ENCODE measurements at regions of chr12 and their contacts with region 1.

Region 1: DNA sequence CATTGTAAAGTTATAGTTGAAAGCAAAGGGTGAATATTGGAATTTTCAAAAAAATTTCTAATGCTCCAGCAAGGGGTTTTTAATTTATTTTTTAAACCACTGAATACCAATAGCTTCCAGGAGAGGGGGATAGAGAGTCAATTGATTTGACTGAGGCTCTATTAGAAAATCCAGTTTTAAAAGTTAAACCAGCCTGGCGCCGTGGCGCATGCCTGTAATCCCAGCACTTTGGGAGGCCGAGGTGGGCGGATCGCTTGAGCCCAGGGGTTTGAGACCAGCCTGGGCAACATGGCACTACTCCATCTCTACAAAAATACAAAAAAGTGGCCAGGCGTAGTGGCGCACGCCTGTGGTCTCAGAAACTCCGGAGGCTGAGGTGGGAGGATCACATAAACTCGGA is 150.1 kb downstream of the SLC38A4 start:
- DNase-seq: no peak
- ATAC-seq: no peak
- H3K4me3 Mint-ChIP-seq: no peak overlapping the region
- H3K27ac Mint-ChIP-seq: no peak overlapping the region
- H3K4me1 Mint-ChIP-seq: peaks cover 8% of the 10 kb centered on the region
- H3K27me3 Mint-ChIP-seq: no peaks in the 10 kb centered on the region

Region 2: DNA sequence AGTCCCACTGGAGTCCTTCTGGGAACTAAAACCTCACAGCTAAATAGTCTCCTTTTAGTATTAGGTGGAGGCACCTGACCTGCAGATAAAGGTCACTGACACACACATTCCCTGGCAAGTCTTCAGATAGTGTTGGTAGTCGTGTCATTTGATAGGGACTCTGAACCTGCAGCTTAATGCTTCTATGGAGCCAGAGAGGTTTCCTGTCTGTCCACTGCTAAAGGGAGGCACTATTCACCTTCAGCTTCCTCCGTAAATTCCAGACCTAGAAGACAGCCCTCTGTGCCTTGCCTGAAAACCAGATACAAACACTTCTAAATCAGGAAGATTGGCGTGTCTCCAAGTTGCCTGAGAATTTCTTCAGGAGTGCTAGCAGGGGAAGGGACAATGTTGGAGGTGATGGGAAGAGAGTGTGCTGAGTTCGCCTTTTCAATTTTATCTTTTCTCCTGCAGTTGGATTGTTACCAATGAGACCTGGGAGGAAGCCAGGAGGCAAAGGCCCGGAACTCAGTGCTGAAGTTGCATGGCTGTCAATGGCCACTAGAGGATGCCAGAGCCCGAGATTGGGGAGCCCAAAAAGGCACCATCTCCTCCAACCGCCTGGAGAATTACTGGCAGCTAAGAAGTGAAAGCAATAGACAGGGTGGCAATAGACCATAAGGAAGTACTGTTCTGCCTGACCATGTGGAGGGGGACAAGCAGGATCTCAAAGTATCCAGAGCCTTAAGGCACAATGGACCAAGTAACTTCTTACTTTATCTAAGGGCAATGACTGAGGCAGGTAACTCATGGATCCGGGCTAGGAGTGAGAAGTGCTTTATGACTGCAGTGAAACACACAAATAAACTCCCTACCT is 603.7 kb before region 1 on chr12:
- CTCF ChIA-PET with region 1: no interaction called
- POLR2A ChIA-PET with region 1: no interaction called
- intact Hi-C with region 1: loop called in 1 of 2 experiments (anchors 5 kb)
- DNase-seq: peak; percentile 80
- ATAC-seq: peak; percentile 98
- H3K4me3 Mint-ChIP-seq: no peak overlapping the region
- H3K27ac Mint-ChIP-seq: peak overlapping the region; percentile 47
- H3K4me1 Mint-ChIP-seq: peaks cover 3% of the 10 kb centered on the region
- H3K27me3 Mint-ChIP-seq: peaks cover 2% of the 10 kb centered on the region

Region 3: DNA sequence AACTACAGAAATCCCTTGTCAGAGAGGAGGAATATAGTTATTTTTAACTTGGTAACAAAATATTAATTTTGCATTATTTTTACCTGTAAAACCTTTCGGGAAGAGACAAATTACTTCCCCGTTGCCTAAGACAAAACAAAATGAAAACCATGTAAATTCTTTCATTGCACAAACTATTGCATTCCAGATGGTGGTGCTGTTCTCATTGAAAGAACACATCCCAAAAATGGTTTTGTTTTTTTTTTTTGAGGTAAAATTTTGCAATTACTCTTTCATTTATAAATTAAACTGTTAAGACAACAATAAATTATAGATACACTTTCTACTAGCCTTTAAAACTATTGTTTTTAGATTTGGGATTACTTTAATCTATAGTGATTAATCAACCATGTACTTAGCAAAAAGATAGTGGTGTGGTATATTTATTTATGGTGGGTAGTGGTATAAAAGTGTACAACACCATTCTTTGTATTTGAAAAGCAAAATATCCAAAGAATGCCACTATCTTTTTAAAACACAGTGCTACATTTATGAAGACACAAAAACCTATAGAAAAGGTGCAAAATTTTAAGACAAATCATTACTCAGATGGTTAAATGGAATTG is 522.4 kb before region 1 on chr12:
- CTCF ChIA-PET with region 1: no interaction called
- POLR2A ChIA-PET with region 1: no interaction called
- intact Hi-C with region 1: loop called (anchors 2 to 10 kb)
- DNase-seq: no peak
- ATAC-seq: no peak
- H3K4me3 Mint-ChIP-seq: no peak overlapping the region
- H3K27ac Mint-ChIP-seq: no peak overlapping the region
- H3K4me1 Mint-ChIP-seq: peaks cover 9% of the 10 kb centered on the region
- H3K27me3 Mint-ChIP-seq: peaks cover under 1% of the 10 kb centered on the region

Region 4: GRCh38 chr12:46342562-46343033 is 333.1 kb before region 1 on chr12:
- CTCF ChIA-PET with region 1: interaction called, 3 read pairs
- POLR2A ChIA-PET with region 1: no interaction called
- intact Hi-C with region 1: loop called in 1 of 2 experiments (anchors 2 kb)
- DNase-seq: peak; percentile 21
- ATAC-seq: peak; percentile 66
- H3K4me3 Mint-ChIP-seq: no peak overlapping the region
- H3K27ac Mint-ChIP-seq: no peak overlapping the region
- H3K4me1 Mint-ChIP-seq: peaks cover 5% of the 10 kb centered on the region
- H3K27me3 Mint-ChIP-seq: peaks cover 2% of the 10 kb centered on the region

Region 5: GRCh38 chr12:46933947-46934346 is 258.2 kb after region 1 on chr12:
- CTCF ChIA-PET with region 1: no interaction called
- POLR2A ChIA-PET with region 1: no interaction called
- intact Hi-C with region 1: loop called (anchors 2 to 5 kb)
- DNase-seq: no peak
- ATAC-seq: no peak
- H3K4me3 Mint-ChIP-seq: no peak overlapping the region
- H3K27ac Mint-ChIP-seq: no peak overlapping the region
- H3K4me1 Mint-ChIP-seq: no peaks in the 10 kb centered on the region
- H3K27me3 Mint-ChIP-seq: peaks cover 18% of the 10 kb centered on the region

Region 6: DNA sequence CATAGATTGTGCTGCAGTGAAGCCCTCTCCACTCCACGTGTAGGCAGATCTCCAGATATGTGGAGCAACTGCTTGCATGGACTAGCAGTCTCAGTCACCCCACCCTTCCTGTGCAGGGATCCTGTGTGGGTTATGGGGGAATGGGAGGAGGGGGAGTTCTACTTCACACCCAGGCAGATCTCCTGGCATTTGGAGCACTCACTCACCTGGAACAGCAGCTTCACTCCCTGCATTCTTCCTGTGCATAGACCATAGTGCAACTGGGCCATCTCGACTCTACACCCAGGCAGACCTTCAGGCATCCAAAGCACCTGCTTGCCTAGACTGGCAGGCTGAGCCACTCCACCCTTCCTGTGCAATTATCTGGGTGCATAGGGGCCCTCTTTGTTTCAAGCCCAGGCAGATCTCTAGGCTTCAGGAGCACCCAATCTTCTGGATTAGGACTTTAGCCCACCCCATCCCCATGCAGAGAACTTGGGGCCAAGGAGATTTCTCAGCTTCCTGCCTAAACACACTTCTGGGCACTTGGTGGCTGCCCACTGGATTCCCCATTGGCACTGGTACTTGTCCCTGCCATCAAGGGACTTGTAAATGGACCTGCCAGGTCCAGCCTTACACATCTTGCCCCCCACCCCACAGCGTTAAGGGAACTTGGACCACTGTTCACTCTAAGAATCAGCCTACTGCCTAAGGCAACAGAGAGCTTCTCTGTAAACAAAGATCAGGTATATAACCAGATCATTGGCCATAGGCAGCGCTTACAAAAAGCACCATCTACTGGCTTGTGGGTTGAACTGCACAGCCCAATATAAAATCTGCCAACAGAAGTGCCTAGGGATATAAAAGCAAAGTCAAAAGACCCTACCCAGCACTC is 307.9 kb after region 1 on chr12:
- CTCF ChIA-PET with region 1: interaction called, 11 read pairs
- POLR2A ChIA-PET with region 1: no interaction called
- intact Hi-C with region 1: loop called in 1 of 2 experiments (anchors 2 kb)
- DNase-seq: peak; percentile 44
- ATAC-seq: peak; percentile 66
- H3K4me3 Mint-ChIP-seq: no peak overlapping the region
- H3K27ac Mint-ChIP-seq: no peak overlapping the region
- H3K4me1 Mint-ChIP-seq: peaks cover 4% of the 10 kb centered on the region
- H3K27me3 Mint-ChIP-seq: peaks cover 19% of the 10 kb centered on the region

Region 7: DNA sequence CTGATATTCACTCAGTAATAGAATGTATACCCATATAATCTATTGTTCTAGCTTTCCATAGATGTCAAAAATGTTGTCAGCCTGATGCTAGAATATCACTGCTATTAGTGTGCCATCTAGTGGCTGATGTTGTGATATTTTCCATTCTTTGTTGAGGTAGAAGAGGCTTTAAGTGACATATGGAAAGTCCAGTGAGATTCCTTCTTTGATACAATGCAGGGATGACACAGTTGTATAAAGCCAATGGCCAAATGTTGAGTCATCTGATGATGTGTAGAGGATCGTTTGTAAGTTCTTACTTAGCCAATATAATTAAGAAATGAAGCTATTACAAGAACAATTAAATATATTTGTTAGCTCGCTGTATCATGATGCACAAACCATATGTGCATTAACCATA is 345.6 kb after region 1 on chr12:
- CTCF ChIA-PET with region 1: interaction called, 3 read pairs
- POLR2A ChIA-PET with region 1: no interaction called
- intact Hi-C with region 1: loop called in 1 of 2 experiments (anchors 1 kb)
- DNase-seq: no peak
- ATAC-seq: peak; percentile 75
- H3K4me3 Mint-ChIP-seq: no peak overlapping the region
- H3K27ac Mint-ChIP-seq: no peak overlapping the region
- H3K4me1 Mint-ChIP-seq: peaks cover 3% of the 10 kb centered on the region
- H3K27me3 Mint-ChIP-seq: peaks cover 7% of the 10 kb centered on the region

Measured in activated CD4-positive, alpha-beta T cell treated with anti-CD3 and anti-CD28 coated beads for 36 hours (primary cell).